ENCODE measurements at regions of chr7 and their contacts with region 1.

Region 1: GRCh38 chr7:148262721-148263229 is 327.8 kb upstream of the C7orf33 start:
- DNase-seq: peak; percentile 68
- CTCF ChIP-seq: peak; percentile 93

Region 2: DNA sequence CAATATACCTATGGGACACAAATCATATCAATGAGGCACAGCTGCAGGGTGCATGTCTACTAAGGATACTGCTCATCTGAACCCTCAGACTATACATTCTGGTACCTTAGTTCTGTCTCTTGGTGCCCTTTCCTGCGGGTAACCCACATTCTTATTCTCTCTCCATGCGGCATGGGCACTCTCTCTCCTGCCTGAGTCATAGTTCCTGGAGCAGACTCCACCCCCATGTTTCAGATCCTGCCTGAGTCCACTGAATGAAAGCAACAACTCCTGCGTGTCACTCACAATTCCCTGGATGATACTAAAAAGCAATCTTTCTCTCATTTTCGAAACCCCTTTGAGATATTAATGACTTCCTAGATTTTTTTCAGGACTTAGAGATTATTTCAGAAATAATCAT is 325.3 kb before region 1 on chr7:
- CTCF ChIA-PET with region 1: no interaction called
- POLR2A ChIA-PET with region 1: no interaction called
- DNase-seq: no peak
- CTCF ChIP-seq: no peak

Region 3: GRCh38 chr7:148242294-148242801 is 20.4 kb before region 1 on chr7:
- CTCF ChIA-PET with region 1: interaction called, 40 read pairs
- POLR2A ChIA-PET with region 1: no interaction called
- DNase-seq: peak; percentile 44
- CTCF ChIP-seq: peak; percentile 81

Region 4: GRCh38 chr7:148276314-148277041 is 13.7 kb after region 1 on chr7:
- CTCF ChIA-PET with region 1: interaction called, 43 read pairs
- POLR2A ChIA-PET with region 1: no interaction called
- DNase-seq: no peak
- CTCF ChIP-seq: no peak

Region 5: DNA sequence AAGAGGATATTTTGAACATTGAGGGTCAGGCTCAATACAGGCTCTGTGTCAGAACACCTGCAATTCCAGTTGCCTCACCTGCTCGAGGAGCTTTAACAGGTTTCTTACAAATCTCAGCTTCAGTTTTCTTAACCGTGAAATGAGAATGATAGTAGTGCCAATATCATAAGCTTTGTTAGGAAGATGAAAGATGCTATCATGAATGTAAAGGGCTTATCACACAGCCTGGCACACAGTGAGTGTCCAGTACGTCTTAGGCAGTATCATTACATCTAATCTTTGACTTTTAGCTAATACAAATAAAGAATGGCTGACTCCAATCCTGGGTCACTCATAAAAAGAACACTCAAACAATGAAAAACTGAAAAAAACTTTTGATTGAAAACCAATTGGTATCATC is 19.5 kb after region 1 on chr7:
- CTCF ChIA-PET with region 1: interaction called, 43 read pairs
- POLR2A ChIA-PET with region 1: no interaction called
- DNase-seq: no peak
- CTCF ChIP-seq: no peak

Region 6: GRCh38 chr7:148527707-148528168 is 265.0 kb after region 1 on chr7:
- CTCF ChIA-PET with region 1: interaction called, 10 read pairs
- POLR2A ChIA-PET with region 1: no interaction called
- DNase-seq: peak; percentile 73
- CTCF ChIP-seq: peak; percentile 74

Region 7: GRCh38 chr7:148545932-148546331 is 283.2 kb after region 1 on chr7:
- CTCF ChIA-PET with region 1: no interaction called
- POLR2A ChIA-PET with region 1: no interaction called
- DNase-seq: no peak
- CTCF ChIP-seq: no peak

Region 8: DNA sequence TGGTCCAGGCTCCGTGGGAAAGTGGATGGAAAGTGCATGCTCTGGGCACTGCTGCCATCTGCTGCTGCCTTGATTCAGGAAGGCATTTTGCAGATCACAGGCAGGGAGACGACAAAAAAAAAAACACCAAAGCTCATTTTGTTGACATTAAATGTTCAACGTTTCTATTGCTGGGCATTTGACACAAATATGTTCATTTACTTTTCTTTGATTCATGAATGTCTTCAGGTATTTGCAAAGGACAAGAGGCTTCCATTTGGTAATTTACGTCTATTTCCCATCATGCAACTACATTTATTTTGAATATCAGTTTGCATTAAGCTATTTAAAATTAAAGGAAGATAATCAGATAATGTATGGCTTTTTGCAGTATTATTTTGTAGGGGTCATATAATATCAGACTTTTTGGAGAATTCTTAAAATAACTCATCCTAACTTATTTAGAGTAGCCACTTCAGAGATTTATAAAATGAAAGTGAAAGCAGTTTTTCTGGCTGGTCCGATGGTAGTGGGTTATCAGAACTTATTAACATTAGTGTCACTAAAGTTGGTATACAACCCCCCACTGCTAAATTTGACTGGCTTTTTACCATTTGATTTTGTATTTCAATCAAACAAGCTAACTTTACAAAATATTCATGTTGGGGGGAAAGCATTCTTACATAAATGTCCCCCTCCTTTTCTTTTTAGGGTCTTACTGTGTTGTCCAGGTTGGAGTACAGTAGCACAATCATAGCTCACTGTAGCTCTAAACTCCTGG is 700.2 kb after region 1 on chr7:
- CTCF ChIA-PET with region 1: interaction called, 15 read pairs
- POLR2A ChIA-PET with region 1: no interaction called
- DNase-seq: peak; percentile 64
- CTCF ChIP-seq: peak; percentile 78

Measured in GM10248 (cell line).